ENCODE measurements at regions of chr19 and their contacts with region 1.

Region 1: GRCh38 chr19:38634757-38635482 is 12.5 kb upstream of the ACTN4 start:
- DNase-seq: peak; percentile 83
- ATAC-seq: no peak
- H3K4me3 Mint-ChIP-seq: no peak overlapping the region
- H3K27ac Mint-ChIP-seq: peak overlapping the region; percentile 80
- H3K4me1 Mint-ChIP-seq: peaks cover 42% of the 10 kb centered on the region
- H3K27me3 Mint-ChIP-seq: no peaks in the 10 kb centered on the region

Region 2: GRCh38 chr19:38387550-38388348 is 247.2 kb before region 1 on chr19 and contains the start of gene GGN:
- CTCF ChIA-PET with region 1: interaction called, 10 read pairs
- DNase-seq: peak; percentile 84
- ATAC-seq: peak; percentile 77
- H3K4me3 Mint-ChIP-seq: peak within 1 kb of the TSS; percentile 70
- H3K27ac Mint-ChIP-seq: peak within 1 kb of the TSS; percentile 44
- H3K4me1 Mint-ChIP-seq: peaks cover 16% of the 10 kb centered on the region
- H3K27me3 Mint-ChIP-seq: peaks cover 37% of the 10 kb centered on the region
- total RNA-seq, gene GGN: not detected

Region 3: GRCh38 chr19:38544034-38544958 is 90.6 kb before region 1 on chr19:
- CTCF ChIA-PET with region 1: interaction called, 72 read pairs
- DNase-seq: peak; percentile 64
- ATAC-seq: peak; percentile 93
- H3K4me3 Mint-ChIP-seq: peak overlapping the region; percentile 19
- H3K27ac Mint-ChIP-seq: peak overlapping the region; percentile 71
- H3K4me1 Mint-ChIP-seq: peaks cover 28% of the 10 kb centered on the region
- H3K27me3 Mint-ChIP-seq: no peaks in the 10 kb centered on the region

Region 4: GRCh38 chr19:38618590-38619360 is 16.1 kb before region 1 on chr19 and contains the start of gene EIF3K:
- CTCF ChIA-PET with region 1: interaction called, 93 read pairs
- DNase-seq: peak; percentile 99
- ATAC-seq: peak; percentile 74
- H3K4me3 Mint-ChIP-seq: peak within 1 kb of the TSS; percentile 96
- H3K27ac Mint-ChIP-seq: peak within 1 kb of the TSS; percentile 89
- H3K4me1 Mint-ChIP-seq: peaks cover 48% of the 10 kb centered on the region
- H3K27me3 Mint-ChIP-seq: no peaks in the 10 kb centered on the region
- total RNA-seq, gene EIF3K: 281 to 308 TPM

Region 5: GRCh38 chr19:38685666-38686529 is 51.0 kb after region 1 on chr19:
- CTCF ChIA-PET with region 1: interaction called, 11 read pairs
- DNase-seq: no peak
- ATAC-seq: peak; percentile 5
- H3K4me3 Mint-ChIP-seq: peak overlapping the region; percentile 42
- H3K27ac Mint-ChIP-seq: peak overlapping the region; percentile 78
- H3K4me1 Mint-ChIP-seq: peaks cover 90% of the 10 kb centered on the region
- H3K27me3 Mint-ChIP-seq: no peaks in the 10 kb centered on the region

Region 6: DNA sequence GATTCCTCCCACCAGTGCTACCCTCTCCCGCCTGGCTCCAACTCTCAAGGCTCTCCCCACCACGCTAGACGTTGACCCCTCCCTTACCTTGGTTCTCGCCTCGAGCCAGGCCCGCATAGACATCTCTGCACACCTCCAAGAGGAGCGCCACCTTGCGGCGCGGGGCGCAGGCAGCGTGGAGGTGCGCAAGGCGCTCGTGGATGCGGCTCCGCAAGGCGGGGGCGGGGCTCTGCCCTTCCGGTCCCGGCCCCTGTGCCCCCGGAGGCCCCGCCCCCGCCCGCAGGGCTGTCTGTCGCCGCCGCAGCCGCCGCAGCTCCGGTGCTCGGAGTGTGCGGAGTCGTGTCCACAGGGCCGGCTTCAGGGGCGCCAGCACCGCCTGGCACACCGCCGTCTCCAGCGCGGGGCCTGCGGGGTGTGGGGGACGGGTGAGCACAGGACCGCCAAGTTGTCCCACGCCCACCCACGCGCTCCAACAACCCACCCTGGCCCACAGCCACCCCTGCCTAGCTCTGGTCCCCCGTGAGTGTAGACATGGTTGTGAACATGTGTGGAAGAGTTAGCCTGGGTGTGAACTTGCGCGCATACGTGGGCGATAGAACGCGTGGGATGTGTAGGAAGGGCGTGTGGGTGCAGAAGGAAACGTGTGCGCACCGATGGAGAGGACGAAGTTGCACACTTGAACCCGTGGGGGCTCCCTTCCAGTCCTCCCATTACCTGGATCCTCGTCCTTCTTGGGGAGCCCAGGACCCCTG is 235.1 kb after region 1 on chr19:
- CTCF ChIA-PET with region 1: interaction called, 10 read pairs
- DNase-seq: peak; percentile 95
- ATAC-seq: peak; percentile 96
- H3K4me3 Mint-ChIP-seq: peak overlapping the region; percentile 79
- H3K27ac Mint-ChIP-seq: peak overlapping the region; percentile 85
- H3K4me1 Mint-ChIP-seq: peaks cover 37% of the 10 kb centered on the region
- H3K27me3 Mint-ChIP-seq: no peaks in the 10 kb centered on the region